H1 (cell line): ENCODE measurements at regions of chr14 and their contacts with region 1.

Region 1: GRCh38 chr14:104677512-104678332 is 11.7 kb upstream of the INF2 start:
- DNase-seq: peak in 1 of 2 experiments; percentile 84
- H3K4me3 ChIP-seq: peak overlapping the region; percentile 35 to 62 (median 55)
- H3K27ac ChIP-seq: peak overlapping the region; percentile 90
- H3K4me1 ChIP-seq: peaks cover 11 to 63% (median 45%) of the 10 kb centered on the region in 4 experiments
- H3K27me3 ChIP-seq: peaks cover 0 to 7% (median 0%) of the 10 kb centered on the region in 4 experiments; a peak in 2 of 7 replicates
- CTCF ChIP-seq: no peak
- EP300 ChIP-seq: no peak
- POLR2A ChIP-seq: peak in 1 of 2 experiments; percentile 67; a peak in 2 of 3 replicates
- RAD21 ChIP-seq: no peak

Region 2: DNA sequence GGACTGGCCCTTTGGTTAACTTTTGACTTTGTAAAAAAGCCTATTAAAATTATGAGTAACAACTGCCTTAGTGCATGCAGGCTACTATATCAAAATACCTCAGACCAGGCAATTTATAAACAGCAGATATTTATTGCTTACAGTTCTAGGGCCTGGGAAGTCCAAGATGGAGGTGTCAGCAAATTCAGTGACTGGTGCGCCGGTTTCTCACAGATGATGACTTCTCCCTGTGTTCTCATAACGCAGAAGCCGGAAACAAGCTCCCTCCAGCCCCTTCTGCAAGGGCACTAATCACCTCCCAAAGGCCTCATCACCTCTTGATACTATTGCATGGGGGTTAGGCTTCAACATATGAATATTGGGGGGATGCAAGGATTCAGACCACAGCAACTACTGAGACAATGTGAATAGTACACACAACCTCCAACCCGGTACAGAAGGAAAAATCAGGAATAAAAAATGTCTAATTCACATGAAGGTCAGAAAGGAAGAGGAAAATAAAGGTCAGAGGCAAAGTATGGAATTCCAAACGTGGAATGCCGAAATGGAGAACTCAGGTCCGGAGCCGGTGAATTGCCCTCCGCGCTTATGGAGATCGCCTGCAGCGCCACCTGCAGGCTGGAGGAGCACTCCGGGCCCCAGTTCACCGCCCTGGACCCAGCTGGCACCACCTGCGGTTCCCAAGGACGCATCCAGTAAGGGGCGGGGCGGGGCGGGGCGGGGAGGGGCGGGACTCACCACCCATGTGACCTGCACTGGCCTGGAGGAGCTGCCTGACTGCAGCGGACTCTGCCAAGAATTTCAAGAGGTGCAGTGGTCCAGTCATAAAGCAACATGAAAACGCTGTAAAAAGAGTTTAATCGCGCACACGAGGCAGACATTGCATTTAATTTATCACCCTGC is 335.9 kb before region 1 on chr14:
- CTCF ChIA-PET with region 1: no interaction called
- POLR2A ChIA-PET with region 1: no interaction called
- DNase-seq: peak; percentile 68 to 85
- H3K4me3 ChIP-seq: peak overlapping the region in 3 of 4 experiments; percentile 13 to 50 (median 29); a peak in 3 of 8 replicates
- H3K27ac ChIP-seq: no peak overlapping the region
- H3K4me1 ChIP-seq: peaks cover 0 to 12% (median 6%) of the 10 kb centered on the region in 4 experiments; a peak in 5 of 7 replicates
- H3K27me3 ChIP-seq: no peaks in the 10 kb centered on the region
- CTCF ChIP-seq: peak; percentile 74 to 78 (median 74)
- EP300 ChIP-seq: no peak
- POLR2A ChIP-seq: no peak
- RAD21 ChIP-seq: peak; percentile 52 to 65

Region 3: DNA sequence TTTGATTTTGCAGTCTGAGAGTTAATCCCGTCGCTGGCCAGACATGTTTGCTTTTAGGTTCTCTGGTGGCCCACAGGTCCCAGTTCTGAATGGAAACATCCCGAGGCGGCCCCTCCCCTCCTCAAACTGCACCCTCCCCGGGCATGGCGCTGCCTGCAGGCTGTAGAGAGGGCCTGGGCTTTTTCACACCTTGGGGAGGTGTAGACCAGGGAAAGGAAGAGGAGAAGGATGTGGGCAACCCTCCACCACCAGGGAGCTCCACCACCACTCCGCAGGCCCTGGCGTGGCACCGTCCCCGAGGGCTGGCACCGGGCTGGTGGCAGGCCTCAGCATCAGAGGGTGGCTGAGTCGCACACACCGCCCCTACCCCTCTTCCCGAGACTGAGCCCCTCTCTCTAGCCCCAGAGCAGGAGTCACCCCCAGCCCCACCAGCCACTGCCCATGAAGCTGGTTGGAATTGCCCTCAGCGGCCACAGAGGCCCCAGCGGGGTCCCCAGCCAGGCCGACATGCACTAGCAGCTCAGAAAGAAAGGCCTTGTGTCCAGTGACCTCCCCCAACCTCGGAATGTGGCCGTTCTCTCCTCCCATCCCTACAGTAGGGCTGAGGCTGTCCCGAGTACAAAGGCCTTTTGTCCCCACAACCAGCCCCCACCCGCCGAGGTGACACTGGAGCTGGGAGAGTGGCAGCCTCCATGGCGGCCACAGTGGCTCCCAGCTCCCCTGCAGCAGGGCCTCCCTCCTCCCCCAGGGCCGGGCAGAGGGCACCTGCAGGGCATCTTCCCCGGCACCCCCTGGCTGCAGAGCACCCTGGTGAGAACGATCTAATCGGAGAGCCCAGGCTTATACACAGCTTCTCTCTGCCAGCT is 11.8 kb before region 1 on chr14:
- CTCF ChIA-PET with region 1: interaction called, 26 read pairs
- POLR2A ChIA-PET with region 1: interaction called, 94 read pairs
- DNase-seq: no peak
- H3K4me3 ChIP-seq: no peak overlapping the region
- H3K27ac ChIP-seq: no peak overlapping the region
- H3K4me1 ChIP-seq: peaks cover 0 to 14% (median 9%) of the 10 kb centered on the region in 4 experiments; a peak in 6 of 7 replicates
- H3K27me3 ChIP-seq: no peaks in the 10 kb centered on the region
- CTCF ChIP-seq: peak; percentile 18 to 52 (median 45); a peak in 3 of 4 replicates
- EP300 ChIP-seq: no peak
- POLR2A ChIP-seq: no peak
- RAD21 ChIP-seq: peak; percentile 12 to 39; a peak in 2 of 4 replicates

Region 4: DNA sequence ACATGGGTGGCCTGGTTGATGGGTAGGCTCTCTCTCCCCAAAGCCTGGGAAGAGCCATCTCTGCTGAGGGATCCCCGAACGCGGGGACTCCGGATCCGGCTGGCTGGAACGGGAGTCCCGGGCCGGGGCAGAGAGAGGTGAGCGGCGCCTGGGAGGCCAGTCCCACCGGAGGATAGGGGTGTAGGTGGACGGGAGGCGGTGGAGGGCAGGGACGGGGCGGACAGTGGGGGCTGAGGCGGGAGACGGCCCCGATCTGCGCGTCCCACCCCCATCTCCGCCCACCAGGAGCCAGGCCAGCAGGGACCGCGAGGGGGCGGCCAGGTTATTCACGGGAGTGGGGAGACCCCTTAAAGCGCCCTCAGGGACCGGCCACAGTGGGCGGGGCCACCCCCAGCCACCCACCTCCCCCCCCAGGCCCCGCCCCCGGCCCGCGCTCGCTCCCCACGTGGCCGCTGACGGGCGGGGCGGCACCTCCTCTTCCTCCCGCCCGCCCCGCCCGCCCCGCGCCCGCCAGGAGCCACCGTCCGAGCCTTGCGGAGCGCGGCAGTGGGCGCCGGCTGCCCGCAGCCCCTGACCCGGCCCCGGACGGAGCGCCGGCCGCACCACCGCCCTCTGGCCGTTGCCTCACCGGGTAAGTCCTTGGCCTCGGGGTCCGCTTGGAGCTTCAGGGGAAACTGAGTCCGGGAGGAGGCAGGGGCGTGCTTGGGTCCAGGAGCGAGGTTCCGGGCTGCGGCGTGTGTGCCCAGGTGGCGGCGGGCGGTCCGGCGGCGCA is 11.6 kb after region 1 on chr14 and contains the start of gene INF2:
- CTCF ChIA-PET with region 1: interaction called, 70 read pairs
- POLR2A ChIA-PET with region 1: interaction called, 71 read pairs
- DNase-seq: peak in 1 of 2 experiments; percentile 84
- H3K4me3 ChIP-seq: peak within 1 kb of the TSS; percentile 54 to 92 (median 70)
- H3K27ac ChIP-seq: no peak within 1 kb of the TSS; the same call in 1 of the 2 replicates
- H3K4me1 ChIP-seq: peaks cover 0 to 35% (median 28%) of the 10 kb centered on the region in 4 experiments; a peak in 6 of 7 replicates
- H3K27me3 ChIP-seq: no peaks in the 10 kb centered on the region; a peak in 2 of 7 replicates
- CTCF ChIP-seq: no peak
- EP300 ChIP-seq: no peak
- POLR2A ChIP-seq: no peak
- RAD21 ChIP-seq: no peak
- total RNA-seq, gene INF2: 54.0 and 59.5 TPM in 2 replicates

Region 5: GRCh38 chr14:104694991-104695659 is 17.4 kb after region 1 on chr14:
- CTCF ChIA-PET with region 1: interaction called, 70 read pairs
- POLR2A ChIA-PET with region 1: interaction called, 71 read pairs
- DNase-seq: no peak
- H3K4me3 ChIP-seq: no peak overlapping the region
- H3K27ac ChIP-seq: no peak overlapping the region
- H3K4me1 ChIP-seq: peaks cover 0 to 33% (median 25%) of the 10 kb centered on the region in 4 experiments; a peak in 6 of 7 replicates
- H3K27me3 ChIP-seq: no peaks in the 10 kb centered on the region; a peak in 1 of 7 replicates
- CTCF ChIP-seq: no peak
- EP300 ChIP-seq: no peak
- POLR2A ChIP-seq: no peak
- RAD21 ChIP-seq: no peak